ENCODE measurements at regions of chr14 and their contacts with region 1.

Region 1: GRCh38 chr14:63632932-63633514 is 8.6 kb downstream of the WDR89 start:
- DNase-seq: peak in 1 of 2 donors; percentile 70
- ATAC-seq: peak; percentile 79 to 97 (median 89)
- H3K4me3 ChIP-seq: no peak overlapping the region
- H3K4me3 Mint-ChIP-seq: no peak overlapping the region
- H3K27ac ChIP-seq: no peak overlapping the region
- H3K27ac Mint-ChIP-seq: peak overlapping the region in 1 of 2 donors; percentile 9
- H3K4me1 ChIP-seq: no peaks in the 10 kb centered on the region
- H3K4me1 Mint-ChIP-seq: peaks cover 32 to 34% of the 10 kb centered on the region in 2 donors
- H3K27me3 ChIP-seq: no peaks in the 10 kb centered on the region
- H3K27me3 Mint-ChIP-seq: no peaks in the 10 kb centered on the region
- CTCF ChIP-seq: peak; percentile 82

Region 2: GRCh38 chr14:63770187-63770807 is 137.3 kb after region 1 on chr14:
- intact Hi-C with region 1: loop called (anchors 1 kb)
- DNase-seq: peak; percentile 23 to 83
- ATAC-seq: peak; percentile 79 to 90 (median 89)
- H3K4me3 ChIP-seq: no peak overlapping the region
- H3K4me3 Mint-ChIP-seq: no peak overlapping the region
- H3K27ac ChIP-seq: no peak overlapping the region
- H3K27ac Mint-ChIP-seq: no peak overlapping the region
- H3K4me1 ChIP-seq: no peaks in the 10 kb centered on the region
- H3K4me1 Mint-ChIP-seq: no peaks in the 10 kb centered on the region
- H3K27me3 ChIP-seq: no peaks in the 10 kb centered on the region
- H3K27me3 Mint-ChIP-seq: no peaks in the 10 kb centered on the region
- CTCF ChIP-seq: peak; percentile 80